ENCODE measurements at regions of chrX and their contacts with region 1.

Region 1: GRCh38 chrX:129606918-129607317 is 47.8 kb downstream of the APLN start:
- DNase-seq: peak; percentile 71
- H3K4me3 Mint-ChIP-seq: no peak overlapping the region
- H3K27ac Mint-ChIP-seq: no peak overlapping the region
- H3K4me1 Mint-ChIP-seq: no peaks in the 10 kb centered on the region
- H3K27me3 Mint-ChIP-seq: peaks cover 35% of the 10 kb centered on the region
- CTCF ChIP-seq: peak; percentile 74

Region 2: GRCh38 chrX:129247642-129248041 is 359.3 kb before region 1 on chrX:
- CTCF ChIA-PET with region 1: no interaction called
- POLR2A ChIA-PET with region 1: no interaction called
- intact Hi-C with region 1: no loop called
- DNase-seq: no peak
- H3K4me3 Mint-ChIP-seq: no peak overlapping the region
- H3K27ac Mint-ChIP-seq: no peak overlapping the region
- H3K4me1 Mint-ChIP-seq: no peaks in the 10 kb centered on the region
- H3K27me3 Mint-ChIP-seq: no peaks in the 10 kb centered on the region
- CTCF ChIP-seq: no peak

Region 3: DNA sequence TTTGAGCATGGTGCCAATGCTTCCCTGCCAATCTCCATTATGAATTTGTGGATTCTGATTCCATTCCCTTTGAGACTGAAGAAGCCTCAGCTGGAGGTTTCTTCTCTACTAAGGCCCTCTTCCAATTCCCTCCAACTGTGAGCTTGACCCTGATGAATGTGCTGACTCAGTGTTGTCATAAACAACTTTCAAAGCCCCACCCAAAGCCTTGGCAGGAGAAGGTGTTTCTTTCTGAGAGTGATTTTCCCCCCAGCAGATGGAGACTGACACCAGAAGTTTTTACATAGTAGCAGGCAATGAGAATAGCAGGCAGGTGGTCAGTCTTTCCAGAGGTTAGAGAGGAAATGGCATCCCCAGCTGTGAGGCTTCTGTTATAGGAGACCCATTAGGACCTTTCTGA is 13.8 kb before region 1 on chrX:
- CTCF ChIA-PET with region 1: interaction called, 12 read pairs
- POLR2A ChIA-PET with region 1: interaction called, 3 read pairs
- intact Hi-C with region 1: no loop called
- DNase-seq: peak; percentile 48
- H3K4me3 Mint-ChIP-seq: no peak overlapping the region
- H3K27ac Mint-ChIP-seq: no peak overlapping the region
- H3K4me1 Mint-ChIP-seq: peaks cover 6% of the 10 kb centered on the region
- H3K27me3 Mint-ChIP-seq: peaks cover 16% of the 10 kb centered on the region
- CTCF ChIP-seq: no peak

Region 4: DNA sequence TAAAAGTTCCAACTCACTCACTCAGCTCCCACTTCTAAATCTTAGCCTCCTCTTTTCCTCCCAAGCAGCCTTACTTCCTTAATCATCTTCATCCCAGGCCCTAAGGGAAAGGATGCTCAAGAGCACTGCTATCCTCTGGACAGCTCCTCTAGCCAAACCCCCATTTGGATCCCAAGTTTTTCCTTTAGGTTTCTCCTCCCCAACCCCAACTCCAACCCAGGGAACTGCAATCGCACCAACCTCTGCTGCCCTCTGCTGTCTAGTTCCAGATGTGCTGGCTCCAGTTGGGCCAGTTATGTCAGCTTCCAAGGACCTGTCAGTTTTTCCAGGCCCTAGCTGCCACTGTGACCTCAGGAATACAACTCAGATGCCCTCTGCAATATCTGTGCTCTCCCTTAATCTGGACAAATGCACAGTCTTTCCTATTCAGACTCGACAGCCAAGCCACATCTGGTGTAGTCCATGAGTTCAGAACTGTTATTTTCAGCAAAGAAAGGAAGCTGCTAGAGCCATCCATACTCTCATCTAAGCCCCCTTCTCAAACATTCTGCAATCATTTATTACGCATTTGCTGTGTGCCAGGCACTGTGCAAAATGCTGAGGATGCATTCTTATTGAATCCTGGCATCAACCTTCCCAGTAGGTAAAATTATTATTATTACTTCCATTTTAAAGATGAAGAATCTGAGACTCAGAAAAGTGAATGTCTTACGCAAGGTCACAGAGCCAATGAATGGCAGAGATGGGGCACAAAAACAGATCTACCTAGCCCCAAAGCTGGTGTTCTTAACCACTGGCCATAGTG is 119.6 kb after region 1 on chrX:
- CTCF ChIA-PET with region 1: interaction called, 47 read pairs
- POLR2A ChIA-PET with region 1: interaction called, 4 read pairs
- intact Hi-C with region 1: loop called (anchors 1 kb)
- DNase-seq: peak; percentile 62
- H3K4me3 Mint-ChIP-seq: no peak overlapping the region
- H3K27ac Mint-ChIP-seq: no peak overlapping the region
- H3K4me1 Mint-ChIP-seq: no peaks in the 10 kb centered on the region
- H3K27me3 Mint-ChIP-seq: peaks cover 73% of the 10 kb centered on the region
- CTCF ChIP-seq: peak; percentile 75

Region 5: DNA sequence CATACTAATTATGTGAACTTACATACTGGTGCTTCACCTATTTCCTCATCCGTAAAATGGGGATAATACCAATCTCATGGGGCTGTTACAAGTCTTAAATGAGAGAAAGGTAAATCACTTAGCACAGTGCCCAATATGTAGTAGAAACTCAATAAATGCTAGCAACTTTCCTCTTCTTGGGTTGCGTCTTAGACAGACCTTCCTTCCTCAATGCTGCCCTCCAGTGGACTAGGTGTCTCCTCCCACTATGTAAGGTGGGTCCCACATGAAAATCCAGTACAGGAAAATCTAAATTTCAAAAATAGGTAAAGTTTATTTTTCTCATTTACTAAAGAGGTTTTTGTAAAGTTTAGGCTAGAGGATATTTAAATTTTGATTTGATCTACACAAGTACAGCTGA is 216.2 kb after region 1 on chrX:
- CTCF ChIA-PET with region 1: interaction called, 3 read pairs
- POLR2A ChIA-PET with region 1: no interaction called
- intact Hi-C with region 1: loop called (anchors 1 kb)
- DNase-seq: peak; percentile 63
- H3K4me3 Mint-ChIP-seq: no peak overlapping the region
- H3K27ac Mint-ChIP-seq: no peak overlapping the region
- H3K4me1 Mint-ChIP-seq: no peaks in the 10 kb centered on the region
- H3K27me3 Mint-ChIP-seq: no peaks in the 10 kb centered on the region
- CTCF ChIP-seq: peak; percentile 37

Region 6: GRCh38 chrX:129905787-129906580 is 299.1 kb after region 1 on chrX and contains the start of gene UTP14A:
- CTCF ChIA-PET with region 1: no interaction called
- POLR2A ChIA-PET with region 1: no interaction called
- intact Hi-C with region 1: loop called (anchors 10 kb)
- DNase-seq: peak; percentile 88
- H3K4me3 Mint-ChIP-seq: peak within 1 kb of the TSS; percentile 78
- H3K27ac Mint-ChIP-seq: peak within 1 kb of the TSS; percentile 83
- H3K4me1 Mint-ChIP-seq: peaks cover 3% of the 10 kb centered on the region
- H3K27me3 Mint-ChIP-seq: peaks cover 18% of the 10 kb centered on the region
- CTCF ChIP-seq: no peak
- total RNA-seq, gene UTP14A: 30.3 and 48.3 TPM in 2 replicates

Region 7: GRCh38 chrX:130028196-130028595 is 421.3 kb after region 1 on chrX:
- CTCF ChIA-PET with region 1: interaction called, 3 read pairs
- POLR2A ChIA-PET with region 1: no interaction called
- intact Hi-C with region 1: loop called (anchors 2 kb)
- DNase-seq: peak; percentile 45
- H3K4me3 Mint-ChIP-seq: no peak overlapping the region
- H3K27ac Mint-ChIP-seq: no peak overlapping the region
- H3K4me1 Mint-ChIP-seq: no peaks in the 10 kb centered on the region
- H3K27me3 Mint-ChIP-seq: peaks cover 36% of the 10 kb centered on the region
- CTCF ChIP-seq: peak; percentile 40

Region 8: GRCh38 chrX:130060122-130061069 is 453.5 kb after region 1 on chrX:
- CTCF ChIA-PET with region 1: interaction called, 10 read pairs
- POLR2A ChIA-PET with region 1: no interaction called
- intact Hi-C with region 1: loop called (anchors 1 kb)
- DNase-seq: peak; percentile 67
- H3K4me3 Mint-ChIP-seq: peak overlapping the region; percentile 65
- H3K27ac Mint-ChIP-seq: peak overlapping the region; percentile 85
- H3K4me1 Mint-ChIP-seq: no peaks in the 10 kb centered on the region
- H3K27me3 Mint-ChIP-seq: peaks cover 26% of the 10 kb centered on the region
- CTCF ChIP-seq: peak; percentile 78